ENCODE measurements at regions of chr21 and their contacts with region 1.

Region 1: DNA sequence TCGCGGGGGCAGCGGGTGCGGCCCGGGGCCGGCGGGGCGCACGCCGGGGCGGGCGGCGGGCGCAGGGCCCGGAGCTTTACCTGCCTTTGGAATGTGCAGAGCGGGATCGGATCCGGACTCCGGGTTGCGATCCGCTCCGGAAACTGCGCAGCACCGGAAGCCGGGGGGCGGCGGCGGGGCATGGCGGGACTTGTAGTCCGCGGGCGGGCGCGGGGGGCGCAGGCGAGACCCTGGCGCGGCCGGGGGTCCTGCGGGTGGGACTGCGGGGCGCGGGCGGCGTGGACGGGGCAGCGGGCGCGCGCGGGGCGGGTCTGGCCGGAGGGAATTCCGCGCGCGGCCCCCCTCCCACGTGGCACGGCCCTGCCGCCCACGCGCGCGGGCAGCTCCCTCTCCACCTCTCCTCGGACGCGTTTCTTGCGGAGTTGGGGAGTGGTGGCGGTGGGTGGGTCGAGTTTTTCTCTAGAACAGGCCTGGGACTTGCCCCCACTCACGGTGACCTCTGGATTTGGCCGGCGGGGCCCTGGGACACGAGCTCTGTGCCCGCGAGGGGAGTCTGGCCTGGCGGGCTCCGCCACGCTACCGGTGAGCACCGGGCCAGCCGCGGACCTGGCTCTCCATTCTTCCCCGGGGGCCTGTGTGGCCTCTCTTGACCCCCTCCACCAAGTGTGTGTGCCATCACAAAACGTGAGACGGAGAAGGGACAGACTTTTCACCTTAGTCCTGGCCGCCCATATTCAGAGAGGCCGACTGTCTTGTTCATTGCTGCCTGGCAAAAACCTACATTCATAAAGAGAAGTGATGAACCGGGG is at the start of gene PRDM15:
- DNase-seq: peak; percentile 33 to 49 (median 40)
- H3K4me3 ChIP-seq: peak within 1 kb of the TSS; percentile 63 to 82 (median 64)
- H3K4me3 Mint-ChIP-seq: peak within 1 kb of the TSS; percentile 86 to 91
- H3K27ac ChIP-seq: peak within 1 kb of the TSS in 1 of 2 donors; percentile 70
- H3K27ac Mint-ChIP-seq: peak within 1 kb of the TSS; percentile 48 to 91 (median 81)
- H3K4me1 ChIP-seq: peaks cover 19 to 25% of the 10 kb centered on the region in 2 donors
- H3K4me1 Mint-ChIP-seq: peaks cover 25% of the 10 kb centered on the region
- H3K27me3 ChIP-seq: no peaks in the 10 kb centered on the region
- H3K27me3 Mint-ChIP-seq: peaks cover 2 to 3% (median 2%) of the 10 kb centered on the region in 3 donors
- CTCF ChIP-seq: no peak
- polyA plus RNA-seq, gene PRDM15: 0.19 to 19.0 (median 0.74) TPM

Region 2: DNA sequence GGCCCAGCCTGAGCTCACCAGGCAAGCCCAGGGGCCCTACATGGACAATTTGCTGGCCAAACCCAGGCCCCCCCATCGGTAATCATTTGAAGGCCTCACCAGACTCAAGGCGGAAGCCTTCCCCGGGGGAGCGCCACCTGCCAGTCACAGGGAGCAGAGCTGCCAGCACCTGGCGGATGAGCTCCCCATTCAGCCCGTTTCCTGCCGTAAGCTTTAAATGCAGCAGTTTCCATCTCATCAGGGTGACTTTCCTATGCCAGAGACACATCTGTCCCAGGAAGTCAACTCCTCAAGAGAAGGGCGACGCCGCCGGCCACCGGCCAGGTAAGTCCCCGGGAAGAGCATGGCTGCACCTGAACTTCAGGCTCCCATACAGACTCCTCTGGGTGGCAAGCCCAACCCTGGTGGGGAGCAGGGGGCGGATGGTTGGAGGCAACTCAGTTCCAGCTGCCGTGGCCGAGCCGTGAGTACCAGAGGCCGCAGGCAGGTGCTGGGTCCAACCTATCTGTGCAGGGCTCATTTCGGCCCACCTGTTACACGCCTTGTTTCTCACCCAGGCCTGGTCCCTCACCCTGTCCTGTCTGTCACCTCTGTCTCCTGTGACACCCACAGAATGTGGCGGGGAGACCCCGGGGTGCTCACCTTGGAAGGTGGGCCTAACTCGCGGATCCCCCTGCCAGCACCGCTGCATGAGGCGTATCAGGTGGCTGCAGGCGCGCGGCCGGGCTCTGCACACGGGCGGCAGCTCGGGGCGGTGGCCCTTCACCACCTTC is 133.2 kb before region 1 on chr21:
- intact Hi-C with region 1: no loop called
- DNase-seq: no peak
- H3K4me3 ChIP-seq: no peak overlapping the region
- H3K4me3 Mint-ChIP-seq: no peak overlapping the region
- H3K27ac ChIP-seq: no peak overlapping the region
- H3K27ac Mint-ChIP-seq: no peak overlapping the region
- H3K4me1 ChIP-seq: no peaks in the 10 kb centered on the region
- H3K4me1 Mint-ChIP-seq: no peaks in the 10 kb centered on the region
- H3K27me3 ChIP-seq: no peaks in the 10 kb centered on the region
- H3K27me3 Mint-ChIP-seq: peaks cover 15 to 27% (median 23%) of the 10 kb centered on the region in 3 donors
- CTCF ChIP-seq: no peak

Region 3: DNA sequence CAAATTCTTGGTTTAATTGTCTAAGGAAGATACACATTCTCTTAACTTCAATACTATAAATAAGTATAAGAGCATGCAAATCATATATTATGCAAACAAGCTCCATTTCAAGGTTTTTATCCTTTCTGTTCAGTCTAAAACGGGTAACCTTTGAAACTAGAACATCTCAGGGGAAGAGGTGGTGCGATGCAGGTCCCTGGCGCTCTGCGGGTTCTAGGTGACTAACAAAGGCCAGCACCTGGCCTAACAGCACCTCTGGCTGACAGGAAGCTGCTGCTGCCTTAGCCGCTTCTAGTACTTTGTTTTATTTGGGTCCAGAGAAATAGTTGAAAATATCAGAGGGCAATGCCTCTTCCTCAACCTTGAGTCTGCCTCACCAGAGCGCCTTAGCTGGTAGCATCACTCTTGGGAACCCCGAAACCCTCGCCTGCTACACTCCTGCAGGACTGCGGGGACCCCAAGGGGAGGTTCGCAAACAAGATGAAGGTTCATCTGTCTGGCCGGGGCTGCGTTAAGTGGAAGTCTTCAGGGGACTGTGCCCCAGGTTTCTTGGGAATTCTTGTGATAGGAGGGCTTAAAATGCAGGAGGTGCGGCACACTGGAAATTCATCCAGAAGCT is 45.8 kb before region 1 on chr21:
- intact Hi-C with region 1: no loop called
- DNase-seq: no peak
- H3K4me3 ChIP-seq: no peak overlapping the region
- H3K4me3 Mint-ChIP-seq: no peak overlapping the region
- H3K27ac ChIP-seq: no peak overlapping the region
- H3K27ac Mint-ChIP-seq: peak overlapping the region in 1 of 7 donors; percentile 21
- H3K4me1 ChIP-seq: no peaks in the 10 kb centered on the region
- H3K4me1 Mint-ChIP-seq: no peaks in the 10 kb centered on the region
- H3K27me3 ChIP-seq: no peaks in the 10 kb centered on the region
- H3K27me3 Mint-ChIP-seq: peaks cover 0 to 1% (median 0%) of the 10 kb centered on the region in 3 donors
- CTCF ChIP-seq: no peak

Region 4: DNA sequence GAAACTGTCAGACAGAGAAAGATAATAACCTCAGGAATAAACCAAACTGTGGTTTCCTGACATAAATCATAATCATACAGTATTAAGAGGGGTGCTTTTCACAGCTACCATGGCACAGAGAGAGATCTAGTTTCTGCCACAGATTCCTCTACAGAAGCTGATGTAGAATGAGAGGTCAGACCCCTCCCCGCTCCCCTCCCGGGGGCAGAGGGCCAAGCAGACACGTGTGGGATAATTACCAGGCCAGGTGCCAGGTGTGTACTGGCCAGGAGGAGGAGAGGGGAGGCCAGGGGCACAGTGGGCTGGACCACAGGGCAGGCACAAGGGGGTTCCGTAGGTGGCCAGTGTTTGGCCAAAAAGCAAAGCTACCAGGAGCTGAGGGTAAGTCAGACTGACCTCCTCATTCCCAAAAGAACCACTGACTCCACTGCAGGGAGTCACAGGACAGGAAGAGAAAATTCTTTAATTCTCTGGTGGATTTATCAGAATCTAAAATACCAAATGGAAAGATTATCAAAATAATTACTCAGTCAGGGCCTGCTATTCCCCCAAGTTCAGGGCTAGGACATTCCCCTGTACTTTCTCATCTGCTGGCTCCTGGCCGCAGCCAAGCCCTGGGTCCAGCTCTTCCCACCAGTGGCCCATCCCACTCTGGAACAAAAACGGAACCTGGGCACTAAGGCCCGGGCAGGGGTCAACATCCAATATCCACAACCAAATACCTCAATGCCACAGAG is 44.4 kb after region 1 on chr21:
- intact Hi-C with region 1: loop called in 1 of 2 experiments (anchors 5 kb)
- DNase-seq: no peak
- H3K4me3 ChIP-seq: no peak overlapping the region
- H3K4me3 Mint-ChIP-seq: no peak overlapping the region
- H3K27ac ChIP-seq: no peak overlapping the region
- H3K27ac Mint-ChIP-seq: peak overlapping the region in 1 of 7 donors; percentile 10
- H3K4me1 ChIP-seq: peaks cover 41 to 48% of the 10 kb centered on the region in 2 donors
- H3K4me1 Mint-ChIP-seq: peaks cover 56% of the 10 kb centered on the region
- H3K27me3 ChIP-seq: no peaks in the 10 kb centered on the region
- H3K27me3 Mint-ChIP-seq: peaks cover 0 to 3% (median 2%) of the 10 kb centered on the region in 3 donors
- CTCF ChIP-seq: no peak

Region 5: GRCh38 chr21:41933313-41934086 is 54.1 kb after region 1 on chr21:
- intact Hi-C with region 1: loop called in 1 of 2 experiments (anchors 5 kb)
- DNase-seq: no peak
- H3K4me3 ChIP-seq: peak overlapping the region in 1 of 3 experiments; percentile 49
- H3K4me3 Mint-ChIP-seq: peak overlapping the region; percentile 66 to 77
- H3K27ac ChIP-seq: peak overlapping the region in 1 of 2 donors; percentile 18
- H3K27ac Mint-ChIP-seq: peak overlapping the region; percentile 6 to 82 (median 65)
- H3K4me1 ChIP-seq: peaks cover 38% of the 10 kb centered on the region in 2 donors
- H3K4me1 Mint-ChIP-seq: peaks cover 45% of the 10 kb centered on the region
- H3K27me3 ChIP-seq: no peaks in the 10 kb centered on the region
- H3K27me3 Mint-ChIP-seq: peaks cover 7 to 12% (median 8%) of the 10 kb centered on the region in 3 donors
- CTCF ChIP-seq: no peak

Region 6: GRCh38 chr21:42009831-42010523 is 130.6 kb after region 1 on chr21 and contains the start of gene ZBTB21:
- intact Hi-C with region 1: no loop called
- DNase-seq: peak; percentile 97
- H3K4me3 ChIP-seq: peak within 1 kb of the TSS; percentile 50 to 81 (median 63)
- H3K4me3 Mint-ChIP-seq: peak within 1 kb of the TSS; percentile 93 to 97
- H3K27ac ChIP-seq: peak within 1 kb of the TSS; percentile 93 to 94
- H3K27ac Mint-ChIP-seq: peak within 1 kb of the TSS; percentile 99 to 100 (median 99)
- H3K4me1 ChIP-seq: peaks cover 10 to 19% of the 10 kb centered on the region in 2 donors
- H3K4me1 Mint-ChIP-seq: peaks cover 19% of the 10 kb centered on the region
- H3K27me3 ChIP-seq: peaks cover 10 to 23% of the 10 kb centered on the region in 2 donors
- H3K27me3 Mint-ChIP-seq: peaks cover 24% of the 10 kb centered on the region in 3 donors
- CTCF ChIP-seq: no peak
- polyA plus RNA-seq, gene ZBTB21: 4.7 to 7.2 (median 6.3) TPM

Measured in CD14-positive monocyte (primary cell).